ENCODE measurements at regions of chr10 and their contacts with region 1.

Region 1: GRCh38 chr10:122419876-122420623 is 34.4 kb upstream of the ARMS2 start:
- DNase-seq: no peak
- ATAC-seq: peak; percentile 28

Region 2: GRCh38 chr10:122374237-122374869 is 45.7 kb before region 1 on chr10 and contains the start of gene PLEKHA1:
- intact Hi-C with region 1: loop called (anchors 5 kb)
- DNase-seq: peak; percentile 98
- ATAC-seq: peak; percentile 95
- total RNA-seq, gene PLEKHA1: 68.0 TPM